Activated CD4-positive, alpha-beta T cell treated with anti-CD3 and anti-CD28 coated beads for 36 hours (primary cell): ENCODE measurements at regions of chr22 and their contacts with region 1.

Region 1: DNA sequence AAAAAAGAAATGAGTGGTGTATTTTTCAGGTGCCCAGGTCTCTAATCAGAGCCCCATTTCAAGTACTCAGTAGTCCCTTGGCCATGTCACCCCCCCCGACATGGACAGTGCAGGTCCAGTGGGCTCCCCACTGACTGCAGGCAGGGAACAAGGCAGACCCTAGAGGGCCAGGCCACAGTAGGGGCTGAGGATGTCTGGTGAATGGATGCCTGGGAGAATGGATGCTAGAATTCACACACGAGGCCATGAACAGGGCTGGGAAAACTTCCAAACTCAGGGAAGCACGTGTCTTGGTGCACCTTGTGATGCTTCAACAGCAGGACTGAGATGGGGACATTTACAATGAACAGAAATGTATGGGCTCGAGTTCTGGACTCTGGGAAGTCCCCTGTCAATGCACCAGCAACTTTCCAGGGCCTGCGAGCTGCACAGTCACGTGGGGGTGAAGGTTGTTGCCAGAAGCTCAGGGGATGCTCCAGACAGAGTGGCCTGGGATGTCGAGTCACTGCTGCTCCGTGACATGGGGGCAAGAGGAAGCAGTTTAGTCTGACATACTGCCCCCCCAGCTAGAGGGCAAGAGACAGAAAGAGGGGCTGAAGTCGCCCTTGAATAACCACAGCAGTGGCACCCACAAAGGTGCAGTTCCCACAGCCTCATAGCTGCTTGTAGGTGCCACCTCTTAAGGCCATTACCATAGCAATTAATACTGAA is 3.1 kb downstream of the APOBEC3G start:
- DNase-seq: peak; percentile 4
- ATAC-seq: no peak
- H3K4me3 Mint-ChIP-seq: no peak overlapping the region
- H3K27ac Mint-ChIP-seq: no peak overlapping the region
- H3K4me1 Mint-ChIP-seq: peaks cover 39% of the 10 kb centered on the region
- H3K27me3 Mint-ChIP-seq: no peaks in the 10 kb centered on the region

Region 2: GRCh38 chr22:39013942-39014722 is 66.1 kb before region 1 on chr22 and contains the start of gene APOBEC3C:
- CTCF ChIA-PET with region 1: no interaction called
- POLR2A ChIA-PET with region 1: no interaction called
- intact Hi-C with region 1: loop called in 1 of 2 experiments (anchors 5 kb)
- DNase-seq: peak; percentile 89
- ATAC-seq: peak; percentile 96
- H3K4me3 Mint-ChIP-seq: peak within 1 kb of the TSS; percentile 93
- H3K27ac Mint-ChIP-seq: peak within 1 kb of the TSS; percentile 95
- H3K4me1 Mint-ChIP-seq: peaks cover 33% of the 10 kb centered on the region
- H3K27me3 Mint-ChIP-seq: no peaks in the 10 kb centered on the region
- total RNA-seq, gene APOBEC3C: 75.3 to 98.5 TPM

Region 3: GRCh38 chr22:39039306-39040126 is 40.7 kb before region 1 on chr22:
- CTCF ChIA-PET with region 1: no interaction called
- POLR2A ChIA-PET with region 1: no interaction called
- intact Hi-C with region 1: loop called in 1 of 2 experiments (anchors 5 kb)
- DNase-seq: no peak
- ATAC-seq: no peak
- H3K4me3 Mint-ChIP-seq: peak overlapping the region; percentile 49
- H3K27ac Mint-ChIP-seq: peak overlapping the region; percentile 62
- H3K4me1 Mint-ChIP-seq: peaks cover 22% of the 10 kb centered on the region
- H3K27me3 Mint-ChIP-seq: no peaks in the 10 kb centered on the region

Region 4: GRCh38 chr22:39152511-39153219 is 72.5 kb after region 1 on chr22 and contains the start of gene CBX7:
- CTCF ChIA-PET with region 1: no interaction called
- POLR2A ChIA-PET with region 1: no interaction called
- intact Hi-C with region 1: loop called in 1 of 2 experiments (anchors 2 kb)
- DNase-seq: peak; percentile 95
- ATAC-seq: peak; percentile 83
- H3K4me3 Mint-ChIP-seq: peak within 1 kb of the TSS; percentile 76
- H3K27ac Mint-ChIP-seq: peak within 1 kb of the TSS; percentile 72
- H3K4me1 Mint-ChIP-seq: peaks cover 40% of the 10 kb centered on the region
- H3K27me3 Mint-ChIP-seq: peaks cover 13% of the 10 kb centered on the region
- total RNA-seq, gene CBX7: 19.9 to 20.3 TPM

Region 5: DNA sequence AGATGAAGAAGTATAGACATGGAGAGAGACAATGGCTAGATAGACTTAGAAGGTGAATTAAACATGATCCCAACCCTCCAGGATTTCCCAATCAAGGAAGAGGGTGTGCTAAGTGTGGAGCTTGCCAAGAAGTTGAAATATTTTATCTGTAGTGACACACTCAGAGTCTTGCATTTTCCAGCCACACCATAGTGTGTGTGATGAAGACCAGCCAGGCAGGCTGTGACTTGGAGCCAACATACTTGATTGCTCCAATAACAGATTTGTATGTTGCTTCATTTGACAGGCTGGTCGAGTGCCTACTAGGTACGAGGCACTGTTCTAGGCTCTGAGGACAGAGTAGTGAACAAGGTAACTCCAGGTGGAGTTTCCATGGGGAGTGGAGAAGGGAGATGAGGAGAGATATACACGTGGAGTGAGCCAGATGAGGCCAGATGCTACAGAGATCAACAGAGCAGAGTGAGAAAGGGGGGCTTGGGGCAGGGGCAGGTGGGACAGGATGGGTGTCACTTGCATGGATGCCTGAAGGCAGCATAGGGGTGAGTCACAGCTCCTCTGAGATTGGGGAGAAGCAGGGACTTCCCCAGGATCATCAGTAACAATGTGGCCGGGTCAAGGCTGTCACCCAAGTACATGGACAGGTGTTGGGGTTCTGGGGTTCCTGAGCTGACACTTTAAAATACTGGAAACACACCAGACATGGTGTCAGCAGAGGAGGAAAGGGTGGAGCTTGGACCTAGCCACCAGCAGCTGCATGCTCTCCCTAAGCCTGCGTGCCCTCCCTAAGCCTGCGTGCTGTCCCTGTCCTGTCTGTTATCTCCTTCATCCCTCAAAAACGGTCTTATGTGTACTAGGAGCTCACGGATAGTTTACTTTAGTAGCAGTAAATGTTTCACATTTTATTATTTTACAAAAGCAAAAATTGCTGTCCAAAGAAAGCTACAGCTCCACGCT is 141.0 kb after region 1 on chr22:
- CTCF ChIA-PET with region 1: no interaction called
- POLR2A ChIA-PET with region 1: no interaction called
- intact Hi-C with region 1: no loop called
- DNase-seq: peak; percentile 13
- ATAC-seq: peak; percentile 51
- H3K4me3 Mint-ChIP-seq: no peak overlapping the region
- H3K27ac Mint-ChIP-seq: peak overlapping the region; percentile 32
- H3K4me1 Mint-ChIP-seq: peaks cover 5% of the 10 kb centered on the region
- H3K27me3 Mint-ChIP-seq: peaks cover 8% of the 10 kb centered on the region